ENCODE measurements at regions of chr12 and their contacts with region 1.

Region 1: DNA sequence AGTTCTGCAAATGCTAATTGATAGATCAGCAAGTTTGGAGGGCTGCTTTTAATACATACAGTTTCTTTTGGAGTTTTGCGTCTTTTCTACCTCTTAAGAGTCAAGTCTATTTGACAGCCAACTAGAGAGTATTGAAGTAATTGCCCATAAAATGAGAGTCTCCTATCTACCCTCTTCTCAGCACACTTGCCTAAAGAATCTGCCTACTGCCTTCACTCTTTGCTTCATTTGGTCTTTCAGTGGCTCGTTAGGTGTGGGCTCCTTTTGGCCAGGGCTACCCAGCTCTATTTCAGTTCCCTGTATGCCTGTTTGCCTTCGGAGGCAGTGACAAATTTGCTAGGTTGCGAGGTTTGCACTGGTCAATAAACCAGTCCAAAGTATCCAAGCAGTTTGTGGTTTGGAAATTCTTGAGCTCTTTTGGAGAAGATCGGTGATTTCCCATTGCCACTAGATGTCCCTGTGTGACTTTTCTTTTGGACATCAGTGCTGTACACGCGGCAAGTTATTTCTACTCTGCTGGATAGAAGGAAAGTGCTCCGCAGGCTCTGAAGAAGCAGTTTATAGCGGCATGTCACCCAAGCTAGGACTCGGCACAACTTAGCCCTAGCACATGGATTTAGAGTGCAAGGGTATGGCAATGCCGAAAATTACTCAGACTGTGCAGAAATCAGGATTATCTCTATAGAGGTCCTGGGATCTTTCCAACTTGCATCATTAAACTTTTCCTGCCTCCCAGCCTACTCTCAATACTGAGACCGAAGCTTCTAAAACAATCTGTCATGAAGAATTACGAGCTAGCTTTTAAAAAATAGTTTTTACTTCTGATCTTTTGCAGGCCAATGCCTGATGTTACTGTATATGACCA is 38.6 kb downstream of the MGST1 start:
- DNase-seq: no peak
- H3K4me3 ChIP-seq: peak overlapping the region; percentile 13 to 40 (median 24)
- H3K27ac ChIP-seq: no peak overlapping the region
- H3K4me1 ChIP-seq: peaks cover 0 to 12% (median 3%) of the 10 kb centered on the region in 4 donors
- H3K27me3 ChIP-seq: no peaks in the 10 kb centered on the region
- CTCF ChIP-seq: peak; percentile 45 to 61 (median 53)
- EP300 ChIP-seq: no peak
- POLR2A ChIP-seq: no peak

Region 2: DNA sequence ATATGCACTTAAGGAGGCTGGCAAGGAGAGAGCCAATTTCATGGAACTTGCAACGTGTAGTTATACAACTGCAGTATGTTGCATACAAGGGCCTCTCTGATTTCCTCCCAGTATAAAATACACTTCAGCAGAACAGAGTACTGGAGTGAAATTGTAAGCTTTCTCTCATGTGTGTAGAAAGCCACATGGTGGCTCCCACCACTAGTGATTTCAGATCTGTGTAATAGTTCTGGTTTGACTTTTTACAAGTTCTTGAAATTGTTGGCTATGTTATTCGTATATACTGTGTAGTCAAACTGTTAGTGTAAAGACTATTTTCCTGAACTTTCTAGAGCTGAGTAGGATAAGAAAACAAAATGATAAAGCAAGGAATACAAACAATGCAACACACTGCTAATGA is 236.3 kb after region 1 on chr12:
- intact Hi-C with region 1: loop called (anchors 10 kb)
- DNase-seq: no peak
- H3K4me3 ChIP-seq: no peak overlapping the region
- H3K27ac ChIP-seq: no peak overlapping the region
- H3K4me1 ChIP-seq: no peaks in the 10 kb centered on the region
- H3K27me3 ChIP-seq: no peaks in the 10 kb centered on the region
- CTCF ChIP-seq: peak in 2 of 3 experiments; percentile 10 to 15
- EP300 ChIP-seq: no peak
- POLR2A ChIP-seq: no peak

Region 3: GRCh38 chr12:16685107-16685506 is 299.1 kb after region 1 on chr12:
- intact Hi-C with region 1: loop called (anchors 5 kb)
- DNase-seq: no peak
- H3K4me3 ChIP-seq: no peak overlapping the region
- H3K27ac ChIP-seq: no peak overlapping the region
- H3K4me1 ChIP-seq: no peaks in the 10 kb centered on the region
- H3K27me3 ChIP-seq: no peaks in the 10 kb centered on the region
- CTCF ChIP-seq: peak in 1 of 3 experiments; percentile 39
- EP300 ChIP-seq: no peak
- POLR2A ChIP-seq: no peak